ENCODE measurements at regions of chr12 and their contacts with region 1.

Region 1: GRCh38 chr12:49130151-49131050 is 794 bp downstream of the TUBA1B start:
- DNase-seq: peak; percentile 94 to 97 (median 96)
- ATAC-seq: peak; percentile 85 to 91 (median 86)
- H3K4me3 ChIP-seq: peak overlapping the region; percentile 54 to 100 (median 98)
- H3K27ac ChIP-seq: peak overlapping the region; percentile 93 to 100 (median 100)
- H3K4me1 ChIP-seq: peaks cover 4 to 44% (median 25%) of the 10 kb centered on the region in 12 donors
- H3K27me3 ChIP-seq: no peaks in the 10 kb centered on the region
- CTCF ChIP-seq: peak; percentile 85 to 98 (median 91)
- POLR2A ChIP-seq: no peak

Region 2: DNA sequence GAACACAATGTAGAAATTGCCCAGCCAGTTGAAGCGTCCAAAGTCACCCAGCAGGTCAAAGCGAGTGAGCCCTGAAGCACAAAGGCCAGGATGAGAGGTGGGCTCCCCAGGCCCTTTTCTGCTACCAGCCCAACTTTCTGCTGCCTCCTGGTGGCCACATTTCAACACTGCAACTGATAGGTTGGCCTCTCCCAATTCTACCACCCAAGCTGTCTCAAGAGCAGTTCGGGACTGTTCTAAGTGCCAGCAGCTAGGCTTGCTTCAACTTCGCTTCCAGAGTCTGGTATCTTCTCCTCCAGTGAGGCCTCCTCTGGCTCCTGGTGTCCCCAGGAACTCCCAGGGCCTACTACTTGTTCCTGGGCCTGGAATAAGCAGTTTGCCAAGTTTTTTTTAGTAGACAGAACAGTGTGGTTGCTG is 32.4 kb before region 1 on chr12:
- intact Hi-C with region 1: loop called in 1 of 10 experiments (anchors 2 kb)
- DNase-seq: peak; percentile 27 to 60 (median 47)
- ATAC-seq: peak; percentile 13 to 35 (median 26)
- H3K4me3 ChIP-seq: no peak overlapping the region
- H3K27ac ChIP-seq: no peak overlapping the region
- H3K4me1 ChIP-seq: peaks cover 0 to 23% (median 19%) of the 10 kb centered on the region in 12 donors
- H3K27me3 ChIP-seq: peaks cover 0 to 19% (median 12%) of the 10 kb centered on the region in 9 donors
- CTCF ChIP-seq: peak; percentile 68 to 85 (median 76)
- POLR2A ChIP-seq: no peak

Region 3: DNA sequence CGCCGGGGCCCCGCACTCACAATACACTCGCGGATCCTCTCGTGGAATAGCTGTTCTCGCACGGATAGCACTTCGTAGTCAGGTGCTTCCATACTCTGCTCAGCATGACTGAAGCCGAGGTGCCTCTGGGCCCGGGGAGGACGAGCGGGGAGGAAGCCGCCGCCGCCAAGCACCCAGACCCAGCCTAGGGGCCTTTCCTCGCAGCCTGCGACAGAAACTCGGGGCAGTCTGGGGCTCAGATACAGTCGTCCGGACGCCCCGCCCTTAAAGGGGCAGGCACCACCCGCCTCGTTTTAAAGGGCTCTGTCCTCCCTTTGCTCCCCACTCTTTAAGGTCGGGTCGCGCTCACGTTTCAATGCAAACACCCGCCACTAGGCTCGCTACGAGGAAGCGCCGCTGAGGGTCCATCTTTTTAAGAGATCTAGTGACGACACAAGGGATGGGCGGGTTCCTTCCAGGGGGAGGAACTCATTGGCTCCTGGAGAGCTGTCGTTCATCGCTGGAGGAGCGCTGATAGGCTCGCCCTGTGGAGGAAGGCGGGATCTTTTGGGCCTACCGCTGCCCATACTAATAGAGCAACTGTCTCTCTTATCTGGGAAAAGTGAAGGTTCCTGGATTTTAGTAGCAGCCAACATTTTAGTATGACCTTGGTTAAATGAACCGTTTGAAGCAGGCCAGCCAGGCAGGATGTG is 19.8 kb before region 1 on chr12 and contains the start of gene LMBR1L:
- intact Hi-C with region 1: loop called in 2 of 10 experiments (anchors 1 to 2 kb)
- DNase-seq: peak; percentile 95 to 98 (median 96)
- ATAC-seq: peak; percentile 96 to 98 (median 97)
- H3K4me3 ChIP-seq: peak within 1 kb of the TSS; percentile 71 to 100 (median 96)
- H3K27ac ChIP-seq: peak within 1 kb of the TSS; percentile 94 to 100 (median 99)
- H3K4me1 ChIP-seq: peaks cover 3 to 50% (median 43%) of the 10 kb centered on the region in 12 donors
- H3K27me3 ChIP-seq: no peaks in the 10 kb centered on the region
- CTCF ChIP-seq: peak in 11 of 12 donors; percentile 25 to 71 (median 49)
- POLR2A ChIP-seq: peak; percentile 60 to 91
- total RNA-seq, gene LMBR1L: 10.4 to 43.5 (median 27.9) TPM

Region 4: DNA sequence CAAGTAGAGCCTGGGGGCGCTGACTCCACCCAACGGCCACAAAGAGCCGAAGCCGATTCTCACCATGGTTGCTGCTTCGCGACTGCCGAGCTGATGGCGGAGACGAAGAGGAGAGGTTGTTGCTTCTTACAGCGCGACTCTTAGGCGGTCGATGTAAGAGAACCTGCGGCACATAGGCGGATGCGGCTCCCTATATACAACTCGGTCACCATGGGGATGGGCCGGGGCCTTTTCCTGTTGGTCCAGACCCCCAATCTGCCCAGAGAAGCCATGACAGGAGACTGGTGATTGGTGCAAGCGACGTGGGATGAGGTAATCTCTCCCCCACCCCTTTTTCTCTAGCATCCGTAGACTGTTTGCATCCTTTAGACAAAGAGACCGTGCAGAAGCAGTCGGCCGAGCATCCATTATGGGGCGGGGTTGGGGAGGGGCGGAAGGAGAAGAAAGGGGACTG is 58.5 kb after region 1 on chr12 and contains the start of gene TUBA1A:
- intact Hi-C with region 1: loop called (anchors 1 to 5 kb)
- DNase-seq: peak; percentile 93 to 96 (median 95)
- ATAC-seq: peak; percentile 91 to 95 (median 93)
- H3K4me3 ChIP-seq: peak within 1 kb of the TSS; percentile 43 to 98 (median 88)
- H3K27ac ChIP-seq: peak within 1 kb of the TSS; percentile 90 to 100 (median 98)
- H3K4me1 ChIP-seq: peaks cover 0 to 32% (median 17%) of the 10 kb centered on the region in 12 donors
- H3K27me3 ChIP-seq: no peaks in the 10 kb centered on the region
- CTCF ChIP-seq: no peak
- POLR2A ChIP-seq: peak; percentile 27 to 93
- total RNA-seq, gene TUBA1A: 122 to 280 (median 184) TPM

Region 5: GRCh38 chr12:49288412-49288853 is 158.0 kb after region 1 on chr12:
- intact Hi-C with region 1: no loop called
- DNase-seq: peak in 2 of 5 donors; percentile 40 to 41
- ATAC-seq: peak in 2 of 4 donors; percentile 44 to 54
- H3K4me3 ChIP-seq: no peak overlapping the region
- H3K27ac ChIP-seq: no peak overlapping the region
- H3K4me1 ChIP-seq: peaks cover 0 to 9% (median 6%) of the 10 kb centered on the region in 12 donors
- H3K27me3 ChIP-seq: peaks cover 0 to 28% (median 3%) of the 10 kb centered on the region in 9 donors
- CTCF ChIP-seq: peak; percentile 73 to 89 (median 82)
- POLR2A ChIP-seq: no peak